Testis (tissue), 5 donors: ENCODE measurements at regions of chr7 and their contacts with region 1.

Region 1: DNA sequence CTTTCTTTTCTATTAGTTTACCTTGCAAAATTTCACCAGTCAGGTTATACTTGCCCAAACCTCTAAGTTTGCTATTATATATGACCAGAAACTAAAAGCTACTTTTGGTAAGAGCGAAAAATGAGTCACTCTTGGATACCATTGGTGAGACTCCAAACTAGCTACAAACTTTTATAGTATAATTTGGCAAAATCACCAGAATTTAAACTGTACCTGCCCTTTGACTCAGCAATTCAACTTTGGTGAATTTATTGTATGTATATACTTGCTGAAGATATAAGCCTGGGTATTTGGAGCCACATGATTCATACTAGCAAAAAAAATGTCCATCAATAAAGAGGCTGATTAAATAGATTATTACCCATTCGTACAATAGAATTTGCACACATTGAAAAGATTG is 178.7 kb upstream of the STEAP1 start:
- DNase-seq: no peak
- H3K4me3 ChIP-seq: no peak overlapping the region
- H3K27ac ChIP-seq: no peak overlapping the region
- H3K4me1 ChIP-seq: no peaks in the 10 kb centered on the region
- H3K27me3 ChIP-seq: no peaks in the 10 kb centered on the region
- CTCF ChIP-seq: no peak
- POLR2A ChIP-seq: no peak

Region 2: DNA sequence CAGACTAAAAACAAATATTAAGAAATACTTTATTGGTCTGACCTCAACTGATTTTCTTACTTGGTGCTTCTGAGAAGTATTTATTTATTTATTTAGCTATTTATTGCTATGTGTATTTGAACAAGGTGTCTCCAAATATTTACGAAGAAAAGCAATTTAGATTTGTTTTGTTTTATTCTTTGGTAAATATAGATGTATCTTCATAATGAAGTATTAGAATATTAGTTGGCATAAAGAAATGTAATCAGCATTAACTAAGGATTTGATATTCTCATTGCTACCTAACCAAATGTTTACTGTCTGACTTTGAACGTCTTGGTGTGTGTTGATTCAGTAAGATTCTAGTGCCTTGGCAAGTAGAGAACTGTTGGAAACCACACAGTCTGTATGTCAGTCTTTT is 235.8 kb before region 1 on chr7:
- intact Hi-C with region 1: no loop called
- DNase-seq: no peak
- H3K4me3 ChIP-seq: no peak overlapping the region
- H3K27ac ChIP-seq: no peak overlapping the region
- H3K4me1 ChIP-seq: no peaks in the 10 kb centered on the region
- H3K27me3 ChIP-seq: no peaks in the 10 kb centered on the region
- CTCF ChIP-seq: no peak
- POLR2A ChIP-seq: no peak

Region 3: GRCh38 chr7:90006998-90007654 is 31.5 kb after region 1 on chr7:
- intact Hi-C with region 1: loop called (anchors 2 kb)
- DNase-seq: no peak
- H3K4me3 ChIP-seq: no peak overlapping the region
- H3K27ac ChIP-seq: no peak overlapping the region
- H3K4me1 ChIP-seq: no peaks in the 10 kb centered on the region
- H3K27me3 ChIP-seq: no peaks in the 10 kb centered on the region
- CTCF ChIP-seq: no peak
- POLR2A ChIP-seq: no peak